ENCODE measurements at regions of chr17 and their contacts with region 1.

Region 1: GRCh38 chr17:48175692-48176470 is 68.3 kb downstream of the SNX11 start:
- DNase-seq: no peak
- H3K4me3 ChIP-seq: no peak overlapping the region
- H3K27ac ChIP-seq: no peak overlapping the region
- H3K4me1 ChIP-seq: no peaks in the 10 kb centered on the region
- H3K27me3 ChIP-seq: no peaks in the 10 kb centered on the region
- CTCF ChIP-seq: no peak

Region 2: GRCh38 chr17:48093341-48094045 is 82.4 kb before region 1 on chr17:
- CTCF ChIA-PET with region 1: no interaction called
- POLR2A ChIA-PET with region 1: interaction called, 29 read pairs
- intact Hi-C with region 1: no loop called
- DNase-seq: no peak
- H3K4me3 ChIP-seq: no peak overlapping the region
- H3K27ac ChIP-seq: no peak overlapping the region
- H3K4me1 ChIP-seq: 0 out of 2 replicates have a peak, but pooled peaks cover 8% of the 10 kb centered on the region
- H3K27me3 ChIP-seq: no peaks in the 10 kb centered on the region
- CTCF ChIP-seq: no peak

Region 3: DNA sequence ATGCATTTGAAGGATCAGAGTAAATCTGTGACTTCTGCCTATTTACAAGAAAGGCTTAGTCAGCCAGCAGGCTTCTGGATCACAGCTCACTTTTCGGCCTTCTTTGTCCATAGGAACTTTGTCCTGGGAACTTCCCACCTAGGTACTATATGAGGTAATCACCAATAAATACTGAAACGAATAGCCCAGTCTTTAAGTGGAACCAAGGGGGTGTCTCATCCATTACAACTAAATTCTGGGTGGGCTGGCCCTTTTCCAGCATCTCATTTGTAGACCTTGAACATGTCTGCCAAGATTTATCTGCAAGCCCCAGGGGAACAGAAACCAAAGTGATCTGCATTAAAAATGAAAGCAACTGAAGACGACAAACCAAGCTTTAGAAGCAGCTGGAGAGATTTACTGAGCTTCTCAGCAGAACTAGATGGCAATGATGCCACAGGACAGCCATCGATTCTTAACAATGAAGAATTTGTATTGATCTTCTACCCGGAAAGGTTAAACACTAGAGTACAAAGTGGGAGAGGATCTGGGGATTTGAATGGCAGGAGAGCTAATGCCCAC is 12.9 kb before region 1 on chr17:
- CTCF ChIA-PET with region 1: interaction called, 3 read pairs
- POLR2A ChIA-PET with region 1: interaction called, 12 read pairs
- intact Hi-C with region 1: no loop called
- DNase-seq: no peak
- H3K4me3 ChIP-seq: no peak overlapping the region
- H3K27ac ChIP-seq: no peak overlapping the region
- H3K4me1 ChIP-seq: no peaks in the 10 kb centered on the region
- H3K27me3 ChIP-seq: no peaks in the 10 kb centered on the region
- CTCF ChIP-seq: no peak

Region 4: GRCh38 chr17:48198950-48199541 is 23.2 kb after region 1 on chr17:
- CTCF ChIA-PET with region 1: interaction called, 14 read pairs
- POLR2A ChIA-PET with region 1: no interaction called
- intact Hi-C with region 1: no loop called
- DNase-seq: no peak
- H3K4me3 ChIP-seq: no peak overlapping the region
- H3K27ac ChIP-seq: no peak overlapping the region
- H3K4me1 ChIP-seq: peaks cover 7% of the 10 kb centered on the region; the same call in 1 of the 2 replicates
- H3K27me3 ChIP-seq: no peaks in the 10 kb centered on the region
- CTCF ChIP-seq: no peak

Region 5: DNA sequence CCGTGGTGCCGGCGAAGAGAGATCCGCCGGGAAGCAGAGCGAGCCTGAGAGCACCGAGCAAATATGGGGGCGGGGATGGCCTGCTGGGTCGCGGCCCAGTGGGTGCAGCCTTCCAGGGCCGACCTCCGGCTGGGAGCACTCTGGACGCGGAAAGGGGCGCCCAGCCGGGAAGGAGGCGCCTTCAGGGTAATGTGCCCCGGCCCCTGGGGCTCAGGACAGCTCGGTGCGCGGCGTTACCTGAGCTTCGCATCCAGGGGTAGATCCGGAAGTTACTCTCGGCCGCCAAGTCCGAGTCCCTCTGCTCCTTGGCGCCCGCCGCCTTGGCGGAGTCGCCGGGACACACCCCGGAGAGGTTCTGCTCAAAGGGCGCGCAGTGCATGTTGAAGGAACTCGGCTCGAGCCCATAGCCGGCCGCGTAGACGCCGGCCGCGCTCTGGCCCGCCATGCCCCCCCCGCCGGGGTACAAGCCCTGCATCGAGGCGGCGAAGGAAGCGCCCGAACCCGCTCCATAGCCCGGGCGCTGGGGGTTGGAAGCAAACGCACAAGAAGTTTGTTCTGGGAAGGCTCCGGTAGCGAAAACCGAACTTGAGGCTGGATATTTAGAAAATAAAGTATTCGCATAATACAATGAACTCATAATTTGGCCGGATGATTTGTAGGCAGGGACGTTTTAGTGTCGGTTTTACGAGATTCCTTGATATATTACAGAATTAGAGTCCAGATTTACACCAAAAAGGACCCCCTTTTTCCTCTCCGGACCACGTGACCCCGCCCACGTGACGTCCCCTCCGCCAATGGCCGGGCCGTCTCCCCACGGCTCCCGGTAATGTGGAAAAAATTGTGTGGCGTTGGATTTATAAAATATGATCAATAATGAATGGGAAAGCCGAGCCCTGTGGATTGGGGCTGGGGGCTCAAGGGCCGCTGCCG is 434.7 kb after region 1 on chr17 and contains the start of gene HOXB7:
- CTCF ChIA-PET with region 1: no interaction called
- POLR2A ChIA-PET with region 1: no interaction called
- intact Hi-C with region 1: no loop called
- DNase-seq: peak; percentile 52 to 64
- H3K4me3 ChIP-seq: peak within 1 kb of the TSS; percentile 80
- H3K27ac ChIP-seq: peak within 1 kb of the TSS; percentile 63
- H3K4me1 ChIP-seq: peaks cover 23% of the 10 kb centered on the region
- H3K27me3 ChIP-seq: no peaks in the 10 kb centered on the region
- CTCF ChIP-seq: no peak
- total RNA-seq, gene HOXB7: 28.2 and 34.0 TPM in 2 replicates